Adrenal gland (tissue), 19 donors: ENCODE measurements at regions of chr1 and their contacts with region 1.

Region 1: DNA sequence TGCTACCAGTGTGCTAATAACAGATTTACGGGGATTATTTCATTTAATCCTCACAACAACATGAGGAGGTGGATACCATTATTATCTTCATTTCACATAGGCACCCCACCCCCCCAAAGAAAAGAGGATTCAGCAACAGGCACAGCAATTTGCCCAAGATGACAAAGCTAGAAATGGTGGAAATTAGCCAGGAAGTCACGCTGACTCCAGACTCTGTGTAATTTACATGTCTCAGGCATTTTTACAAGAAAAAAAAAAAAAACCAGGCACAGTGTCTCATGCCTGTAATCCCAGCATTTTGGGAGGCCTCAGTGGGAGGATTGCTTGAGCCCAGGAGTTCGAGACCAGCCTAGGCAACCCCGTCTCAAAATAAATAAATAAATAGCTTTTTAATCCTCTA is 37.5 kb upstream of the PRDM2 start:
- DNase-seq: peak in 3 of 7 donors; percentile 12 to 33 (median 26)
- H3K4me3 ChIP-seq: no peak overlapping the region
- H3K27ac ChIP-seq: no peak overlapping the region
- H3K4me1 ChIP-seq: no peaks in the 10 kb centered on the region
- H3K27me3 ChIP-seq: no peaks in the 10 kb centered on the region
- CTCF ChIP-seq: no peak
- POLR2A ChIP-seq: no peak

Region 2: DNA sequence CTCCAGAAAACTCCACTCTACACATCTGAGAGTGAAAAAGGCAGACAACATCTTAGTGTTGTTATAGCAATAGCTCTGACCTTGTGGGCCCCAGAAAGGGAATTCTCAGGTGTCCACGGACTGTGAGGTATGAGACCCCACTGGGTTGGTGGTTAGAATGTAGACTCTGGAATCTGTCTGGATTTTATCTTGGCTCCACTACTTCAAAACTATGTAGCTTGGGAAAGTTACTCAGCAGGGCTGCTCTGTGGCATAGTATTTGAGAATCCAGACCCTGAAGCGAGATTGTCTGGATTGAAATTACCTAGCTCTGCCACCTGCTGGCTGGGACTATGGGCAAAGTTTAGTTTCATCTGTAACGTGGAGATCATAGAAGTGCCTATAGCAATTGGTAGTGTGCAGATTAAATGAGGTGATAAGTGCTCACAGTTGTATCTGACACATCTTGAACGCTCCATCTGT is 63.3 kb after region 1 on chr1:
- intact Hi-C with region 1: loop called in 1 of 2 experiments (anchors 10 kb)
- DNase-seq: peak; percentile 30 to 70 (median 39)
- H3K4me3 ChIP-seq: no peak overlapping the region
- H3K27ac ChIP-seq: no peak overlapping the region
- H3K4me1 ChIP-seq: peaks cover 0 to 3% of the 10 kb centered on the region in 2 donors
- H3K27me3 ChIP-seq: no peaks in the 10 kb centered on the region
- CTCF ChIP-seq: peak in 5 of 6 experiments; percentile 44 to 56 (median 52)
- POLR2A ChIP-seq: no peak

Region 3: GRCh38 chr1:13813398-13814012 is 151.0 kb after region 1 on chr1:
- intact Hi-C with region 1: loop called (anchors 5 kb)
- DNase-seq: peak in 5 of 7 donors; percentile 25 to 55 (median 37)
- H3K4me3 ChIP-seq: no peak overlapping the region
- H3K27ac ChIP-seq: no peak overlapping the region
- H3K4me1 ChIP-seq: peaks cover 3 to 6% of the 10 kb centered on the region in 2 donors
- H3K27me3 ChIP-seq: no peaks in the 10 kb centered on the region
- CTCF ChIP-seq: peak; percentile 37 to 62 (median 49)
- POLR2A ChIP-seq: no peak

Region 4: DNA sequence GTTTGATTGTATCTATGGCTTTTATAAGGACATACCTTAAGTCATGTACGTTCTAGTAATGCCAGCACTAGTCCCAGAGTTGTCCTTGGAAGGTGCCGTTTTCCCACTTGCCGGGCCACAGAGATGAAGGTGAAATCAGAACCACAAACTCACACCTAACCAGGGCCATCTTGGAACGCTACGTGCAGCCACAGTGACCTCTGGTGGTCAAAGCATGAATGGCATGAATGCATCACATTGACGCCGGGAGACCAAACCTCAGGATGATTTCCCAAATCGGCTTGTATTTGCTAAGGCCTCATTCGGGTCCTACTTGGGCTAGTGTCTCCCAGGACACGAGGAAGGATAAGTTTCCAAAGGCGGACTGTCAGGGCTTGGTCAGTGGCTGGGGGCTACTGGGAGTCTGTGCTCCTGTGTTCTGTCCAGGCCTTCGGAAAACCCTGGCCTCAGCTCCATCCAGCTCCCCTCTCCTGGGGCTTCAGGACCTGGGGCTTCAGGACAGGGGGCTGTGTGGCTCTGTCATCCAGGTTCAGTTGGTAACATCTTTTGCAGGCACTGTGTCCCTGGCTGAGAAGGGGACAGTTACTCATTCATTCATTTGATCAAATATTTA is 298.0 kb after region 1 on chr1:
- intact Hi-C with region 1: loop called (anchors 2 to 5 kb)
- DNase-seq: peak; percentile 50 to 91 (median 74)
- H3K4me3 ChIP-seq: no peak overlapping the region
- H3K27ac ChIP-seq: no peak overlapping the region
- H3K4me1 ChIP-seq: no peaks in the 10 kb centered on the region
- H3K27me3 ChIP-seq: no peaks in the 10 kb centered on the region
- CTCF ChIP-seq: peak; percentile 92 to 97 (median 93)
- POLR2A ChIP-seq: no peak